ENCODE measurements at regions of chr1 and their contacts with region 1.

Region 1: GRCh38 chr1:156129706-156130581 is 15.4 kb downstream of the LMNA start:
- DNase-seq: peak; percentile 93
- H3K4me3 Mint-ChIP-seq: no peak overlapping the region
- H3K27ac Mint-ChIP-seq: no peak overlapping the region
- H3K4me1 Mint-ChIP-seq: peaks cover 50% of the 10 kb centered on the region
- H3K27me3 Mint-ChIP-seq: peaks cover 4% of the 10 kb centered on the region

Region 2: GRCh38 chr1:156082309-156083091 is 47.4 kb before region 1 on chr1 and contains the start of gene MEX3A:
- CTCF ChIA-PET with region 1: interaction called, 737 read pairs
- intact Hi-C with region 1: no loop called
- DNase-seq: peak; percentile 61
- H3K4me3 Mint-ChIP-seq: peak within 1 kb of the TSS; percentile 75
- H3K27ac Mint-ChIP-seq: no peak within 1 kb of the TSS
- H3K4me1 Mint-ChIP-seq: peaks cover 5% of the 10 kb centered on the region
- H3K27me3 Mint-ChIP-seq: peaks cover 26% of the 10 kb centered on the region
- total RNA-seq, gene MEX3A: 0.22 to 0.36 TPM

Region 3: DNA sequence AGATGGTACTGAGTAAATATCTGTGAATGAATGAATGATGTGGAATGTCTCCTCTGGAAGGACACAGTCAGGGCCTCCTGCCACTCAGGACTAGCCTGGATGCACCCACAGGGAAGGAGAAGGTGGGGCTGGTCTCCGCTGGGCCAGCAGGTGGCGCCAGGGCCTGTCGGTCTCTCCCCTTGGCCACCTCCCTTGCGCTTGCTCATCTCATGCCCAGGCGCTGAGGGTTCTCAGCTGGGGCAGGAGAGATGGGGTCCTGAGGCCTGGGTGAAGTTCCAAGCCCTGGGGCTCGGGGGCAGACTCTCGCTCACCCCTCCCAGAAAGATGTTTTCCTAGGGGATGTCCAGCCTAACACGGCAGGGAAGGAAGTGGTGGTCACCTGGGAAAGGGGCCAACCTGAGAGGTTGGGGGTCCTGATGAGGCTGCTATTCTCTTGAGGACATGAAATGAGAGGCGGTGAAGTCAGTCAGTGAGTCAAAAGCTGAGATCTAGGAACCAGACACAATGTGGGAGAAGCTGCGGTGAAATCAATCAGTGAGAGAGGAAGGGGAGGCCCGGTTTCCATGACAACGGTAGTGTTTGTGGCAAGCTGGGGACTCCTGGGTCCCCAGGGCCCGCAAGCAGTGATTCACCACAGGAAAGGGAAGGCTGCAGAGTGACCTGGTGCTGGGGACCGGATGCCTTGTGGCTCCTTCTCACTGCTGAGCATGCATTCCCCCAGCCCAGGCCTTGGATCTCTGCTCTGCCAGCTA is 33.1 kb before region 1 on chr1:
- CTCF ChIA-PET with region 1: interaction called, 737 read pairs
- intact Hi-C with region 1: loop called (anchors 1 kb)
- DNase-seq: peak; percentile 98
- H3K4me3 Mint-ChIP-seq: peak overlapping the region; percentile 40
- H3K27ac Mint-ChIP-seq: peak overlapping the region; percentile 99
- H3K4me1 Mint-ChIP-seq: peaks cover 49% of the 10 kb centered on the region
- H3K27me3 Mint-ChIP-seq: peaks cover 11% of the 10 kb centered on the region

Region 4: GRCh38 chr1:156114101-156114916 is 15.6 kb before region 1 on chr1 and contains the start of gene LMNA:
- CTCF ChIA-PET with region 1: interaction called, 55 read pairs
- intact Hi-C with region 1: loop called (anchors 1 kb)
- DNase-seq: peak; percentile 91
- H3K4me3 Mint-ChIP-seq: peak within 1 kb of the TSS; percentile 86
- H3K27ac Mint-ChIP-seq: peak within 1 kb of the TSS; percentile 50
- H3K4me1 Mint-ChIP-seq: peaks cover 32% of the 10 kb centered on the region
- H3K27me3 Mint-ChIP-seq: peaks cover 22% of the 10 kb centered on the region
- total RNA-seq, gene LMNA: 62.1 to 62.6 TPM

Region 5: DNA sequence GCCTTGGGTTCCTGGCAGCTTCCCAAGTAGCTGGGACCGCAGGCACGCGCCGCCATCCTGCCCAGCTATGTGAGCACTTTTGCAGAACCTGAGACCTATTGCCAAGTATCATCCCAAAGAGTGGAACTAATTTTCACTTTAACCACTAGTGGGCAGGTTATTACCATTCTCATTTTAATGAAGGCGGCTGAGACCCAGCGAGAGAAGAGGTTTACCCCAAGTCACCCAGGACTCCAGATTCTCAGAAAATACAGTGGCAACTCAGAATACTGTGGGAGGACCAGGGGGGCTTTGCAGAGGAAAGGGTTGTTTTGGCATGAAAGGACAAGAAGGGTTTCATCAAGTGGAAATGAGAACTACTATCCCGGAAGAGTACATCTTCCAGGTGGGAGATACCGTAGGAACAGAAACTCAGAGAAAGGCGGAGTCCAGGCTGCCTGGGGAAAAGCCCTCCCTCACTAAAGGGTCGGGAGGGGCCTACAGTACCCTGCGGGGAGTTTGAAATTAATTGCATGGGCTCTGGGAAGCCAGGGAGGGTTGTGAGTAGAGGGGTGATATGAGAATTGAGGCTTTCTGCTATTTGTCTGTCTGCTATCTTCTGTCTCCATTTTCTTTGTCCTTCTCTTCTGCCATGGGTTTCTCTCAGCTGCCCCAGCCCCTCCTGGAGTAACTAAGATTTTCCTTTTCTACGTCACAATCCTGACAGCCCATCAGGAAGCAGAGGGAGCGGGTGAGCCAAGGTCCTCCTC is 16.2 kb after region 1 on chr1:
- CTCF ChIA-PET with region 1: interaction called, 24 read pairs
- intact Hi-C with region 1: no loop called
- DNase-seq: peak; percentile 63
- H3K4me3 Mint-ChIP-seq: peak overlapping the region; percentile 67
- H3K27ac Mint-ChIP-seq: peak overlapping the region; percentile 85
- H3K4me1 Mint-ChIP-seq: peaks cover 49% of the 10 kb centered on the region
- H3K27me3 Mint-ChIP-seq: no peaks in the 10 kb centered on the region